ENCODE measurements at regions of chr12 and their contacts with region 1.

Region 1: GRCh38 chr12:15522565-15523187 is 200.4 kb downstream of the PTPRO start:
- DNase-seq: no peak
- H3K4me3 ChIP-seq: no peak overlapping the region
- H3K27ac ChIP-seq: no peak overlapping the region
- H3K4me1 ChIP-seq: no peaks in the 10 kb centered on the region
- H3K27me3 ChIP-seq: no peaks in the 10 kb centered on the region
- CTCF ChIP-seq: peak; percentile 53 to 64 (median 55)

Region 2: GRCh38 chr12:14723763-14724162 is 798.9 kb before region 1 on chr12:
- intact Hi-C with region 1: loop called (anchors 10 kb)
- DNase-seq: peak in 1 of 2 donors; percentile 65
- H3K4me3 ChIP-seq: no peak overlapping the region
- H3K27ac ChIP-seq: no peak overlapping the region
- H3K4me1 ChIP-seq: no peaks in the 10 kb centered on the region
- H3K27me3 ChIP-seq: no peaks in the 10 kb centered on the region
- CTCF ChIP-seq: peak; percentile 47 to 71 (median 66)

Region 3: GRCh38 chr12:15001733-15002382 is 520.8 kb before region 1 on chr12:
- intact Hi-C with region 1: loop called (anchors 5 kb)
- DNase-seq: peak in 1 of 2 donors; percentile 77
- H3K4me3 ChIP-seq: peak overlapping the region; percentile 6 to 18
- H3K27ac ChIP-seq: no peak overlapping the region
- H3K4me1 ChIP-seq: peaks cover 3 to 8% of the 10 kb centered on the region in 2 donors
- H3K27me3 ChIP-seq: no peaks in the 10 kb centered on the region
- CTCF ChIP-seq: no peak

Region 4: DNA sequence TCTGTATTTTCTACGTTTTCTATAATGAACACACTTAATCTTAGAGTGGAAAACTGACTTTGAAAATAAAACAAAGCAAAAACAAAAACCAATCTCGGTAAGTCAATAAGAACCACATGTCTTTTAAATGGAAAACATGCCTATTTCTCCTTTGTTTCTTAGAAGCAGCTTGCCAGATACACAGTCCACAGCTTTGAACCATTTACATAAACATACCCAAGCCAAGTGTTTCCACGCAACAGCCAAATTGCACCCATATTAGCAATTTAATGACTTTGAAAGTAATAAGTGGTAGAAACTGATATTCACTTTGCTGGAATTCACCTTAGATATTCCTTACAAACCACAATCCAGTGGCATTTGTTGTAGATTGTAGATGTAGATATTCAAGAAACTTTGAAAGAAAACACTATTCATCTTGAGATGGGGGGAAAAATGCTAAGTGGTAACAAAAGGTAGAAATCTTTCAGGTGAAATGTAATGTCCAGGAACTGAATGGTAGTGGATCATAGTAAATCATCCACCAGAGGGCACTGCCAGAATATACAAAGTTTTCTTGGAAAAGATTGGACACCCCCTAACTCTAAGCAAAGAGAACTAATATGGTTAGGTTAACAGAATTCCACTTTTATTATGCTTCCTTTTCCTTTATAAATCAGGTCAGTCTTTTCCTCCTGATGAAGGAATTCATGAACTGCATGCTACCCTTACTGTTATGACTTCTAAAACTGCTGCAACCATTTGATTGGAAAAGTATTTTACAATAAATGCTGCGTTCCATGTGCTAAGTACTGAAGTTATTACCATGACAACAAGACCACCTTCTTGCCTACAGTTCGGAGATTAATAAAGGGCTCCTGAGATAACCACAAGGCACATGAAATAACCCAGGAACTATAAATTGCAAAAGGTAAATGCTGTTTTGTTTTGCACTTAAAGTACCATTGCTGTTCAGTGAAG is 371.2 kb before region 1 on chr12:
- intact Hi-C with region 1: loop called (anchors 5 kb)
- DNase-seq: no peak
- H3K4me3 ChIP-seq: peak overlapping the region in 1 of 2 donors; percentile 42
- H3K27ac ChIP-seq: peak overlapping the region; percentile 74 to 81
- H3K4me1 ChIP-seq: peaks cover 23 to 41% of the 10 kb centered on the region in 2 donors
- H3K27me3 ChIP-seq: no peaks in the 10 kb centered on the region
- CTCF ChIP-seq: peak; percentile 35 to 59 (median 48)